ENCODE measurements at regions of chr10 and their contacts with region 1.

Region 1: GRCh38 chr10:102583435-102584417 is 60.6 kb upstream of the TRIM8 start:
- DNase-seq: peak; percentile 83 to 94 (median 89)
- ATAC-seq: peak; percentile 91 to 92
- H3K4me3 ChIP-seq: no peak overlapping the region
- H3K27ac ChIP-seq: no peak overlapping the region
- H3K4me1 ChIP-seq: no peaks in the 10 kb centered on the region
- H3K27me3 ChIP-seq: no peaks in the 10 kb centered on the region

Region 2: DNA sequence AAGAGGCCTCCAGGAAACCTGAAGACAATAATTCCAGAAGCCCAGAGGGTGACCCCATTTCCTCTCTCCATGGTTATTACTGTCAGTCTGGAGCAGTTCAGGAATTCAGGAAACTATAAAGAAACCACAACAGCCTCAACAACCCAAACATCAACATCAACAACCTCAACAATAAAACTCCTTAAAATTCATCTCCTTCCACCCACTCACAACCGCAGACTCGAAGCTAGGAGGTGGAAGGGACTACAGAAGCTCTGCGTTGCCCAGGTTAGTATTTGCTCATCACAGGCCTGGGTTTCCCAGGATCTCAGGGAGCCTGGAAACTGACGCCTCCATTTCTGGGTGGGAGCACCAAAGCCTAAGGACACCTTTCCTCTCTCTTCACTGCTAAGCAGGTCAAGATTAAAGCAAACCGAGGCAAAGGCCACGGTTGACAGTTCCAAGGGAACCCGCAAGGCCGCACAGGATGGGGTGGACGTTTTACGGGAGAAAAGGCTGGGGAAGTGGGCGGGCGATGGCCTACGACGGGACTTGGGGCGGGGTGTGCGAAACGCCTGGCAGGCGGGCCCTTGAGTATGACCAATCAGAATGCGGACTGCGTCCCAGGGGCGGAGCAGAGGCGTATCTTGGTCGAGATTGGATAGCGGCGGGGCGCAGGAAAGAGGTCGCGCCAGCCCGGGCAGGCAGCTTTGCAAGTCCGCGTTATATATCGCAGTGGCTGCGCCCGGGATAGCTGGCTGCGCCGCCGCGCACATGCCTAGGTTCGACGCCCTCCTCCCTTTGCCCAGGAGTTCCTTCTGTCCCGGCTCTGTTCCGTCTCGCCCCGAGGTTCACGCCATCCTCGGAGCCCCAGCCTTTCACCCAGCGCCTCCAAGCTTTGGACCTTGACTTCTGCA is 357.8 kb before region 1 on chr10 and contains the start of gene ELOVL3:
- intact Hi-C with region 1: loop called in 1 of 4 experiments (anchors 10 kb)
- DNase-seq: peak; percentile 96 to 98 (median 97)
- ATAC-seq: peak; percentile 97 to 98
- H3K4me3 ChIP-seq: peak within 1 kb of the TSS; percentile 37
- H3K27ac ChIP-seq: peak within 1 kb of the TSS; percentile 89
- H3K4me1 ChIP-seq: peaks cover 4% of the 10 kb centered on the region
- H3K27me3 ChIP-seq: no peaks in the 10 kb centered on the region
- total RNA-seq, gene ELOVL3: 0.17 to 0.56 (median 0.32) TPM

Region 3: DNA sequence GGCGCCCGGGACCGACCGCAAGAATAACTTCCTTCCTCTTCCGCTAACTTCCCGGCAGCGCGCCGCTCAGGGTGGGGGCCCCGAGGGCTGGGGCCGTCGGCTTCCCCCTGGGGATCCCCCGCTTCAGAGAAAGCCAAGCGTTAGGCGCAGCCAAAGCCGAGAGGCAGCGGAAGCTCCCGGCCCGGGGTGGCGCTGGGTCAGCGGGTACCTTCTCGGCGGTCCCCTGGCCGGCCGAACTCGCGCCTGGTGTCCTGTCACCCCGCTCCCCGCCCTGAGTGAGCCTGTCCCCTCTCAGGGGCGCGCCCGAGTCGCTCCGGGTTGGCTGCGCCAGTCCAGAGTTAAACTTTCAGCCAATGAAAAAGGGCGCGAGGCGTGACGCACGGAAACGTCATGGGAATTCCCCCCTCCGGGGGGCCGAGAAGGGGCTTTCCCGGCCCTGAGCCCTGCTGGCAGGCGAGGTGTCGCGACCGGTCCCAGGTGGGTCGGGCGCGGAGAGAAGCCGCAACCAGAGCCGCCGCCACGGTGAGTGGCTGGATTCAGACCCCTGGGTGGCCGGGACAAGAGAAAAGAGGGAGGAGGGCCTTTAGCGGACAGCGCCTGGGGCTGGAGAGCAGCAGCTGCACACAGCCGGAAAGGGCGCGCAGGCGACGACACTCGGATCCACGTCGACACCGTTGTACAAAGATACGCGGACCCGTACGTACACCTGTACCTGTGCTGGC is 189.5 kb before region 1 on chr10:
- intact Hi-C with region 1: loop called in 2 of 4 experiments (anchors 5 to 10 kb)
- DNase-seq: peak; percentile 97 to 98 (median 97)
- ATAC-seq: peak; percentile 94 to 95
- H3K4me3 ChIP-seq: peak overlapping the region; percentile 78
- H3K27ac ChIP-seq: peak overlapping the region; percentile 97
- H3K4me1 ChIP-seq: peaks cover 2% of the 10 kb centered on the region
- H3K27me3 ChIP-seq: no peaks in the 10 kb centered on the region

Region 4: DNA sequence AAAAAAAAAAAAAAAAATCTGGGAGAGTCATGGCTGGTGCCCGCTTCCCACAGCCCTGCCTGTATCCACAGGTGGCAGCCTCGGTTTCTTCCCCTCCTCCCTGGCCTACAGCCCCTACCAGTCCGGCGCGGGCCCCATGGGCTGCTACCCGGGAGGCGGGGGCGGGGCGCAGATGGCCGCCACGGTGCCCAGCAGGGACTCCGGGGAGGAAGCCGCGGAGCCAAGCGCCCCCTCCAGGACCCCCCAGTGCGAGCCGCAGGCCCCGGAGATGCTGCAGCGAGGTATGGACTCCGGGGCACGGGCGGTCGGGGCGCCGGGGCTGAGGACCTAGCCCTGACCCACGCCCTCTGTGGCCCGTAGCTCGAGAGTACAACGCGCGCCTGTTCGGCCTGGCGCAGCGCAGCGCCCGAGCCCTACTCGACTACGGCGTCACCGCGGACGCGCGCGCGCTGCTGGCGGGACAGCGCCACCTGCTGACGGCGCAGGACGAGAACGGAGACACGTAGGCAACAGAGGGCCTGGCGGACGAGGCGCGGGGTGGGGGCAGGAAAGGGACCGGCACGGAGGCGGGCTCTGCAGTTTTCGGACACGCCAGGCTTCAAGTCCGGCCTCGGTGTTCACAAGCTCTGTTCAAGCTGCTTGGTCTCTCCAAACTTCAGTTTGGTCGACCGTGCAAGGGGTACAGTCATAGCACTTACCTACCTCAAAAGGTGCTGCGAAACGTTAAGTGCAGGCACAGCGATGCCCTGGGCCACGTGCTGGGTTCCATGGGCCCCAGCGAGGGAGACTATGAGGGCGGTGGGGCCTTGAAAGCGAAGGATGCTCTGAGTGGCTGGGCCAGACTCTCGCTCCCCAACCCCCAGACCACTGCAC is 184.3 kb before region 1 on chr10:
- intact Hi-C with region 1: loop called in 3 of 4 experiments (anchors 5 to 10 kb)
- DNase-seq: peak; percentile 91 to 97 (median 97)
- ATAC-seq: peak; percentile 75 to 79
- H3K4me3 ChIP-seq: peak overlapping the region; percentile 52
- H3K27ac ChIP-seq: peak overlapping the region; percentile 28
- H3K4me1 ChIP-seq: peaks cover 2% of the 10 kb centered on the region
- H3K27me3 ChIP-seq: no peaks in the 10 kb centered on the region

Region 5: GRCh38 chr10:102503281-102504220 is 80.2 kb before region 1 on chr10 and contains the start of gene SUFU:
- intact Hi-C with region 1: loop called (anchors 5 kb)
- DNase-seq: peak; percentile 96 to 99 (median 98)
- ATAC-seq: peak; percentile 89
- H3K4me3 ChIP-seq: peak within 1 kb of the TSS; percentile 88
- H3K27ac ChIP-seq: peak within 1 kb of the TSS; percentile 69
- H3K4me1 ChIP-seq: peaks cover 7% of the 10 kb centered on the region
- H3K27me3 ChIP-seq: no peaks in the 10 kb centered on the region
- total RNA-seq, gene SUFU: 7.7 to 11.8 (median 11.4) TPM

Region 6: GRCh38 chr10:102511583-102512274 is 72.0 kb before region 1 on chr10:
- intact Hi-C with region 1: loop called in 3 of 4 experiments (anchors 5 kb)
- DNase-seq: no peak
- ATAC-seq: no peak
- H3K4me3 ChIP-seq: no peak overlapping the region
- H3K27ac ChIP-seq: no peak overlapping the region
- H3K4me1 ChIP-seq: peaks cover 3% of the 10 kb centered on the region
- H3K27me3 ChIP-seq: no peaks in the 10 kb centered on the region